ENCODE measurements at regions of chr6 and their contacts with region 1.

Region 1: DNA sequence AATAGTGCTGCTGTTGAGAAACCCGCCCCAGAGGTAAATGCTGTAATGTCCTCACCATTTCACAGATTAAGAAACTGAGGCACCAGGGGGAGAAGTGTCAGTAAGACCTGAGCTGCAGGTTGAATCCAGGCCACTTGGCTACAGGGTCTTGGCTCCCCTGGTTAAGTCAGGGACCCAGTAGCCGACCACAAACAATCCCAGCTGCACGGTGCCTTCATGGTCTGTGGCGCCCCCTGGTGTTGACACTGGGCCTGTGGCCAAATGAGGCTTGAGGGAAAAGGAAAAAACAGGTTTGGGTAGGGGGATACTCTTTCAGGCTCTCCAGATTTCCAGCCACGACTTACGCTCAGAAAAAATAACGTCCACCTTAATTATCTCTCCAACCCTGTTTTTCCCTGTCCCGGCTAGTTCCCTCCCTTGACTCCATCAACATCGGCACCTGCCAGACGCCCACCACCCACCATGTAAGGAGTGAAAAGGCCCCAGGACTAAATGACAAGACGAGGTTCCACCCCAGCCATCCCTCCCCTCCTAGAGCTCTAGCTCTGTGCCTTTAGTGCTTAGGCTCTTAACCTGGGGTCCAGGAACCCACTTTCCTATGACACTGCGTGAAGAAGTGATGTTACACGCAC is 47.7 kb upstream of the POLR1H start:
- DNase-seq: peak in 8 of 9 donors; percentile 13 to 47 (median 32)
- ATAC-seq: peak; percentile 57
- H3K4me3 ChIP-seq: no peak overlapping the region
- H3K4me3 Mint-ChIP-seq: no peak overlapping the region
- H3K27ac ChIP-seq: no peak overlapping the region
- H3K27ac Mint-ChIP-seq: peak overlapping the region in 1 of 9 donors; percentile 12
- H3K4me1 ChIP-seq: no peaks in the 10 kb centered on the region
- H3K4me1 Mint-ChIP-seq: peaks cover 0 to 4% (median 0%) of the 10 kb centered on the region in 7 donors
- H3K27me3 ChIP-seq: peaks cover 0 to 3% of the 10 kb centered on the region in 2 donors
- H3K27me3 Mint-ChIP-seq: peaks cover 4 to 34% (median 15%) of the 10 kb centered on the region in 5 donors

Region 2: DNA sequence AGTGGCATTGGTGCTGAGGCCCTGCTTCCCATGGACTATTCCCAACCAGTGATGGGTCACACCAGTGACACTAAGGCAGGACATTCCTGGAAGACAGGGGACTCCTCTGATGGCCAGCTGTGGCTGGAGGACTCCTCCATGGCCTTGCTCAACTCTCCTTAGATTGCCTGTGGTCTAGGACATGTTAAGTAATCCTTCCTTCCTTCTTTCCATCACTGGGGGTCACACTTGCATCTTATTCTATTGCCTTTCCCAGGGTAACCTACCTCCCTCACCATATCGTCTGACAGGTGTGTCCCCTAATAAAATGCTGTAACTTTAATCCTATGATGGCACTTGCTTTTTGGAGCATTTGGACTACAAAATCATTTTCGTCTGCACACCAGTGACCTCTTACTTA is 95.5 kb before region 1 on chr6:
- CTCF ChIA-PET with region 1: interaction called, 3 read pairs
- POLR2A ChIA-PET with region 1: no interaction called
- intact Hi-C with region 1: loop called in 1 of 2 experiments (anchors 1 kb)
- DNase-seq: no peak
- ATAC-seq: no peak
- H3K4me3 ChIP-seq: no peak overlapping the region
- H3K4me3 Mint-ChIP-seq: no peak overlapping the region
- H3K27ac ChIP-seq: no peak overlapping the region
- H3K27ac Mint-ChIP-seq: no peak overlapping the region
- H3K4me1 ChIP-seq: no peaks in the 10 kb centered on the region
- H3K4me1 Mint-ChIP-seq: peaks cover 0 to 15% (median 0%) of the 10 kb centered on the region in 7 donors
- H3K27me3 ChIP-seq: no peaks in the 10 kb centered on the region
- H3K27me3 Mint-ChIP-seq: peaks cover 0 to 35% (median 0%) of the 10 kb centered on the region in 5 donors

Region 3: DNA sequence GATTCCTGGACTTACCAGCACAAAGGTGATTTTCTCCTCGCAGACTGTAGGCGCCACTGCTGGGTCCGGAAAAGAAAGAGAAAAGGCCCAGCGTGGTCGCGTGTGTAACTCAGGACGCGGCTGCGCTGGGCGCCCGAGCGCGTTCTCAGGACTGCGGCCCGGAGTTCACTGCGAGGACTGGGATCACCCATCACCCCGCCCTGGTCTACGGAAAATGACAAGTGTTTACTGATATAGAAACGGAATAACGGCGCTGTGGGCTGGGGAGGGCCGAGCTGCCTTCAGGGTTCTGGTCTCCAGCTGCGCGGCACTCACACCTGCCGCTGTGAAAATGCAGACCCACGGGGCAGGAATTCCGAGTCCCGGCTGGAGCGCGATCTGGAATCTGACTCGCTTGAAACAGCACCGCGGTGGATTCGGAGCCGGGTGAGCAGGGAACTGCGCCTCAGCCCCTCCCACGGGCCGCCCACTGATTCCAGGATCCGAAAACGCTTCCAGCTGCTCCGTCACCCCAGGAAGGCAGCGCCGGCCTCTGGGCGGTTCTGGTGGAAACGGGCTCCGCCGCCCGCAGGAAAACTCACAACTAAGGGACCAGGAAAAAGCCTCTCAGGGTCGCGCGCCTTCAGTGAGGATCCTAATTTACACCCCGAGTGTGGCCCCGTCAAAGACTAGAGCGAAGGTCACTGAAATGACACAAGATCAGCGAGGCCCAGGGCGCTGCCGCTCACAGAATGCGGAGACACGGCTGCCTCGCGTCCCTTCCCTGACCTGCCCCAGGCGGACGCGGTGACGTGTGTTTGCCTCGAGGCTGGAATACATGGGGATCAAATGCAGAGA is 36.6 kb before region 1 on chr6:
- CTCF ChIA-PET with region 1: no interaction called
- POLR2A ChIA-PET with region 1: no interaction called
- intact Hi-C with region 1: loop called in 1 of 2 experiments (anchors 2 kb)
- DNase-seq: peak in 8 of 9 donors; percentile 27 to 60 (median 42)
- ATAC-seq: peak; percentile 87
- H3K4me3 ChIP-seq: peak overlapping the region; percentile 60
- H3K4me3 Mint-ChIP-seq: peak overlapping the region; percentile 87 to 96 (median 92)
- H3K27ac ChIP-seq: no peak overlapping the region
- H3K27ac Mint-ChIP-seq: peak overlapping the region in 4 of 9 donors; percentile 0 to 51 (median 26)
- H3K4me1 ChIP-seq: peaks cover 15 to 21% of the 10 kb centered on the region in 2 donors
- H3K4me1 Mint-ChIP-seq: peaks cover 38 to 46% (median 42%) of the 10 kb centered on the region in 7 donors
- H3K27me3 ChIP-seq: peaks cover 6 to 12% of the 10 kb centered on the region in 2 donors
- H3K27me3 Mint-ChIP-seq: peaks cover 36 to 74% (median 53%) of the 10 kb centered on the region in 5 donors

Measured in naive thymus-derived CD4-positive, alpha-beta T cell (primary cell).